ENCODE measurements at regions of chr15 and their contacts with region 1.

Region 1: DNA sequence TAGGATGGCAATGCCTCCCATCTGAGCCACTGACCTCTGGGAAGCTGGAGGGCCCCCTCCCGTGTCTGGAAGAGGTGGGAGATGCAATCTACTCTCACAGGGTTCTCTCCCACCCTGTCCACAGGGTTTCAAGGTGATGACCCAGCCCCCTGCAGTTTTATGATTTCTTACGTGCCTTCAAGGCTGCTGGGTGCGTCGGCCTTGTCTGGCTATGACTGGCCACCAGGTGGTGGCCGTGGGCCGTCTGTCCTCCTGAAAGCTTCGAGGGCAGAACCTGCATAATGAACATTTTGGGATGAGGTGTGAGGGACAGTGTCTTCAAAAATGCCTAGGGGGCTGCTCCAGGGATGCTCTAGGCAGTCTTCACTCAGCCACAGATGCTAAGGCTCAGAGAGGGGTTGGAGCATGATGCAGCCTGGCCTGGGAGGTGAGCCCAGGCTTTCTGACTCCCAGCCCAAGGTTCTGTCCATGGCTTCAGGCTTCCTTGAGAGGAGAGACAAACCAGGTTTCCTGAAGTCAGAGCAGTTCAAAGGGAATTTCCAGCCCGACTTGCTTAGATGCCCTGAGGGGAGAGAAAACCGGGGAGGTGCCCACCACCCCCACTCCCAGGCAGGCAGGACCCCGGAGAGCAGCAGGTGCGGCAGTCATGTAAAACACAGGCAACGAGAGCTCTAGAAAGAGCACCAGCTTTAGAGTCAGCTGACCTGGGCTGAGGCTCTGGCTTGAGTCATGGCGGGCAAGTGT is 18.7 kb downstream of the ISG20 start:
- DNase-seq: peak in 3 of 9 experiments; percentile 31 to 47 (median 44)
- ATAC-seq: no peak
- H3K4me3 ChIP-seq: no peak overlapping the region
- H3K4me3 Mint-ChIP-seq: peak overlapping the region; percentile 22
- H3K27ac ChIP-seq: peak overlapping the region in 1 of 2 experiments; percentile 44
- H3K27ac Mint-ChIP-seq: peak overlapping the region; percentile 88
- H3K4me1 ChIP-seq: peaks cover 86% of the 10 kb centered on the region
- H3K4me1 Mint-ChIP-seq: peaks cover 82% of the 10 kb centered on the region
- H3K27me3 ChIP-seq: no peaks in the 10 kb centered on the region
- H3K27me3 Mint-ChIP-seq: no peaks in the 10 kb centered on the region
- CTCF ChIP-seq: no peak

Region 2: DNA sequence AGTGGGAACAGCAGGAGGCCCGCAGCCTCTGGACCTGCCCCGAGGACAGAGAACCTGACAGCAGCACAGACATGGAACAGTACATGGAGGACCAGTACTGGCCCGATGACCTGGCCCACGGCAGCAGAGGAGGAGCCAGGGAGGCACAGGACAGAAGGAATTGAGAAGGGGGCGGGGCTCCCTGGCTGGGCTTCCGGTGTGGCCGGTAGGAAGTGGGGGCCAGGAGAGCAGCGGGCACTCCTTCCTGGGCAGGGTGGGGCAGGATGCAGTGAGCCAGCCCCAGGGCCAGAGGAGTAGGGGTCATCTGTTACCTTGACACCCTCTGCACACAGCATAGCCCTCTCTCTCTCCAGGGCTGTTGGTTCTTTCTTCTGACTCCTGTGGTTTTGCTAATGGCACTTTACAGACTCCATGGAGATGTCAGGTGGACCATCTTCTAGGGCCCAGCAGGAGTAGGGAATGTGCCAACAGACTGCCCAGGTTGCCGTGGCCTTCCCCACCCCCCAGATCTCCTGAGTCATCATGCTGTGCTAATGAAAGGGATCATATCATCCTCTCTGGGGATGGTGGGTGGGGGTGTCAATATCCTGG is 27.3 kb before region 1 on chr15:
- CTCF ChIA-PET with region 1: interaction called, 114 read pairs
- POLR2A ChIA-PET with region 1: interaction called, 12 read pairs
- intact Hi-C with region 1: loop called in 1 of 2 experiments (anchors 2 kb)
- DNase-seq: peak in 1 of 9 experiments; percentile 39
- ATAC-seq: no peak
- H3K4me3 ChIP-seq: no peak overlapping the region
- H3K4me3 Mint-ChIP-seq: no peak overlapping the region
- H3K27ac ChIP-seq: peak overlapping the region; percentile 29 to 59
- H3K27ac Mint-ChIP-seq: peak overlapping the region; percentile 94
- H3K4me1 ChIP-seq: peaks cover 92% of the 10 kb centered on the region
- H3K4me1 Mint-ChIP-seq: peaks cover 93% of the 10 kb centered on the region
- H3K27me3 ChIP-seq: no peaks in the 10 kb centered on the region
- H3K27me3 Mint-ChIP-seq: no peaks in the 10 kb centered on the region
- CTCF ChIP-seq: no peak

Region 3: GRCh38 chr15:88834211-88834812 is 176.8 kb after region 1 on chr15:
- CTCF ChIA-PET with region 1: no interaction called
- POLR2A ChIA-PET with region 1: no interaction called
- intact Hi-C with region 1: loop called in 1 of 2 experiments (anchors 5 kb)
- DNase-seq: peak in 6 of 9 experiments; percentile 4 to 55 (median 38)
- ATAC-seq: no peak
- H3K4me3 ChIP-seq: no peak overlapping the region
- H3K4me3 Mint-ChIP-seq: no peak overlapping the region
- H3K27ac ChIP-seq: no peak overlapping the region
- H3K27ac Mint-ChIP-seq: no peak overlapping the region
- H3K4me1 ChIP-seq: no peaks in the 10 kb centered on the region
- H3K4me1 Mint-ChIP-seq: no peaks in the 10 kb centered on the region
- H3K27me3 ChIP-seq: no peaks in the 10 kb centered on the region
- H3K27me3 Mint-ChIP-seq: peaks cover 8% of the 10 kb centered on the region
- CTCF ChIP-seq: no peak

Measured in CD8-positive, alpha-beta T cell (primary cell).